ENCODE measurements at regions of chr21 and their contacts with region 1.

Region 1: DNA sequence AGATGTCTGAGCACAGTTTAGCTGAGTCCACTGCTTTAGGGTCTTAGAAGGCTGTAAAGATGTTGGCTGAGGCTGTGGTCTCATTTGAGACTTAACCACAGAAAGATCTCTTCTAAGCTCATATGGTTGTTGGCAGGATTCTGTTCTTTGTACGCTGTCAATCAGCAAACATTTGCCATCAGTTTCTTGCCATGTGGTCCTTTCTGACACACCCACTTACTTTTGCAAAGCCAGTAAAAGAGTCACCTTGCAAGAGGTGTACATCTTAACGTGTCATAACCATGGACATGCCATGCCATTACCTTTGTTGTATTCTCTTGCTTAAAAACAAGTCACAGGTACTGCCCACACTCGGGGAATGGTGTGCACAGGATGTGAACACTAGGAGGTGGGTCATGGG is 18.7 kb downstream of the DYRK1A start:
- DNase-seq: no peak
- H3K4me3 ChIP-seq: no peak overlapping the region
- H3K27ac ChIP-seq: no peak overlapping the region
- H3K4me1 ChIP-seq: peaks cover 4 to 16% of the 10 kb centered on the region in 2 donors
- H3K27me3 ChIP-seq: no peaks in the 10 kb centered on the region
- CTCF ChIP-seq: no peak

Region 2: DNA sequence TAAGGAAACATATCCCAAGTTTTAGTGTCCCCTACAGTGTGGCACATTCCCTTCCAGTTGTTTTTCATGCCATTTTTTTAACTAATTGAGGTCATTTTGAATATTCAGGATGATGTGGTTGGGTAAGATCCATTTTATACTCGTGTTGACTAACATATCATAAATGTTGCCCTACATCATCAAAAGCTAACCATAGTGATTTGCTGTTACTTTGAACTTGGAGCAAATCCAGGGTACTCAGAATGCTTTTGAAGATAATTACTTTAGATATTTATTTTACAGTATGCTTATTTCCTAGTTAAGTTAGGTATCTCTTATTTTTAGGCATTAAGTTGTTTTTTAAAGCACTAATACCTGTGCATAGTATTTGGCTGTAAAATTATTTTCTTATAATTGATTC is 39.1 kb after region 1 on chr21:
- intact Hi-C with region 1: loop called (anchors 5 kb)
- DNase-seq: no peak
- H3K4me3 ChIP-seq: no peak overlapping the region
- H3K27ac ChIP-seq: peak overlapping the region in 1 of 2 donors; percentile 13
- H3K4me1 ChIP-seq: peaks cover 0 to 19% of the 10 kb centered on the region in 2 donors
- H3K27me3 ChIP-seq: no peaks in the 10 kb centered on the region
- CTCF ChIP-seq: no peak

Measured in ascending aorta (tissue), 2 donors.